Head of caudate nucleus (tissue), 42 donors: ENCODE measurements at regions of chr1 and their contacts with region 1.

Region 1: GRCh38 chr1:160607011-160607671 is 27.8 kb upstream of the CD84 start:
- DNase-seq: peak in 32 of 42 donors; percentile 4 to 77 (median 42)

Region 2: DNA sequence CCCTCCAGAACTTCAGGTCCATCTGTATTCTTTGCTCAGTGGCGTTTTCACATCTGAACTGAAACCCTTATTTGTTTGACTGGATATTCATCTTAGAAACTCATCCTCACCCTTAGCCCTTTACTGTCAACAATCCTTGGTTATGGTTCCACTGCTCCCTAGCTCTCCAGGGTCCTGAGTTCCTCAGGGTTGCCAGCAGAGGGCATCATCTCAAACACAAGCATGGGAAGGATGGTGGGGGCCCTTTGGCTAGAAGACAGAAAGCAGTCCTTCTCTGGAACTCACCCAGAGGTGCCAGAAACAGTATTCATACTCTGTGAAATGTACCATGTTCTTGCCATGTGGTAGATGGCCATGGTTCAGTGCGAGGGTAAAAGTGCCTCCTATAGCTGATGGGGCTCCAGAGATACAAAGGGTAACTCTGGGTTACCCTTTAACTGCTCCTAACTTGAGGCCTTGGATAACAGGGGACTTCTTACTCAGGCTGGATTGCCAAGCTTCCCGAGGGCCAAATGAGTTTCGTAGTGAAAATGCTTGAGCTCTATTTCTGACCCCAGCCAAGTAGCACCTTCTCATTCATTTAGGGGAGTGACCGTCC is 252.7 kb before region 1 on chr1:
- intact Hi-C with region 1: no loop called
- DNase-seq: peak in 4 of 42 donors; percentile 12 to 59 (median 30)

Region 3: DNA sequence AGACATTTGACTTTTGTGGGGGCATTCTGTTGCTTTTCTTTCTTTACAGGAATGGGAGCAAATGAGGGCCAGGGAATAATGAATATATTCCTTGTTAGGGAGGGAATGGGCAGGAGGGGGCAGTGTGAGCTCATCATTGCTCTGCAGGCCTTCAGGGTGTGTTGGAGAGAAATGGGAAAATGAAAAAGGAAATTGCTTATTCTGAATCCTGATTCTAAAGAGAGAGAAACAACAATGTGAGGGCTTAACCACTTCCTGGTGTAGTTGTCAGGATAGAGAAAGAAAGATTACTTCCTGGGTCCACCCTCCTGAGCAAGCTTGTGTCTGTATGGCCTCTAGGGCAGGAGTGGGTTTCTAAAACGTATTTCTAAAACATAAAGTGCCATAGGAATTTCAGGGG is 178.5 kb before region 1 on chr1:
- intact Hi-C with region 1: loop called (anchors 5 kb)
- DNase-seq: peak; percentile 30 to 79 (median 60)